ENCODE measurements at regions of chr5 and their contacts with region 1.

Region 1: GRCh38 chr5:180784497-180785097 is 18.0 kb downstream of the MGAT1 start:
- DNase-seq: no peak
- H3K4me3 ChIP-seq: no peak overlapping the region
- H3K27ac ChIP-seq: no peak overlapping the region
- H3K4me1 ChIP-seq: peaks cover 19% of the 10 kb centered on the region
- H3K27me3 ChIP-seq: no peaks in the 10 kb centered on the region
- CTCF ChIP-seq: peak; percentile 68 to 85 (median 72)

Region 2: DNA sequence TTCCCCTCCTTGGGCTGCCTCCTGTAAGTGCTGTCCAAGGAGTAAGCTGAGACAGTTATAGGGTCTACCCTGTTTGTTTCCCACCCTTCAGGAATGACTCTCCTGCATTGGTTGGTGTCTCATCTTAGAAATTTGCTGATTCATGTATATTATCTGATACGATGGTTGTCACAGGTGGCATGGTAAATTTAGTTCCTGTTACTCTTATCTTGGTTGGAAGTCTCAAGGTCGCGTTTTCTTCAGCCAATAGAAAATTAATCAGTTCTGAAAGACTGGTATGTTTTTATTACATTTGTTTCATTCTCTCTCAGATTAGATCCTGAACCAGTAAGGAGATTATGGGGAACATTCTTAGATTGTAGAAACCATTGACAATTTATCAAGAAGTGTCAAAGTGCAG is 236.0 kb before region 1 on chr5:
- dilution Hi-C with region 1: no loop called
- DNase-seq: no peak
- H3K4me3 ChIP-seq: no peak overlapping the region
- H3K27ac ChIP-seq: no peak overlapping the region
- H3K4me1 ChIP-seq: no peaks in the 10 kb centered on the region
- H3K27me3 ChIP-seq: no peaks in the 10 kb centered on the region
- CTCF ChIP-seq: no peak

Region 3: DNA sequence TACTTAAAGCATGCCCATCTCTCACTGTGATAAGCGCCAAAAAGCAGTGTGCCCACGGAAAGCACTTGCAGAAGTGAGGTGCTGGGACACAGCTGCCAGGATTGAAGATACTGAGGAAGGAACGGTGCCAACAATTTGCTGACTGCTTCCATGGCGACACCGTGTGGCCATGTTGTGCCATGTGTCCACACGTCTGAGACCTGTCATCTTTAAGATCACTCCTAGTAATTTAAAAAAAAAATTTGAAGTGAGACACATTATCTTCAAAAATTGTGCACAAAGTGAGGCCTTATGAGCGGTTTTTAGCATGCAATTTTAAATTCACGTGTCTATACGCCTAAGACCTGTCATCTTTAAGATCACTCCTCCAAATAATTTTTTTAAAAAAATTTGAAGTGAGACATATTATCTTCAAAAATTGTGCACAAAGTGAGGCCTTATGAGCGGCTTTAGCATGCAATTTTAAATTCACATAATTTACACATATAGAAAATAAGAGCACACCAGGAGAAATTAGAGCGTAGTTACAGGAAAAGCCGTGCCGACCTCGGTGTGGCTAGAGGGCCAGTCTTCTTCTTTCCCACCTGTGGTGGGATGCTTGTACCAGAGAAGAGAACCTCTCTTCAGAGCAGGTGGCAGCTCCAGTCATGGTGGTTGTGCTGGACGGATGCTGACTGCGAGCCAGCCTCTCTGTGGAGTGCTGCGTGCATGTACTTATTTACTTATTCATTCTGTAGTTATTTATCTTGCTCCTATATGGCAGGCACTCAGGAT is 113.8 kb before region 1 on chr5:
- dilution Hi-C with region 1: no loop called
- DNase-seq: peak; percentile 11
- H3K4me3 ChIP-seq: no peak overlapping the region
- H3K27ac ChIP-seq: no peak overlapping the region
- H3K4me1 ChIP-seq: no peaks in the 10 kb centered on the region
- H3K27me3 ChIP-seq: peaks cover 13% of the 10 kb centered on the region
- CTCF ChIP-seq: peak; percentile 60 to 89 (median 68)

Region 4: DNA sequence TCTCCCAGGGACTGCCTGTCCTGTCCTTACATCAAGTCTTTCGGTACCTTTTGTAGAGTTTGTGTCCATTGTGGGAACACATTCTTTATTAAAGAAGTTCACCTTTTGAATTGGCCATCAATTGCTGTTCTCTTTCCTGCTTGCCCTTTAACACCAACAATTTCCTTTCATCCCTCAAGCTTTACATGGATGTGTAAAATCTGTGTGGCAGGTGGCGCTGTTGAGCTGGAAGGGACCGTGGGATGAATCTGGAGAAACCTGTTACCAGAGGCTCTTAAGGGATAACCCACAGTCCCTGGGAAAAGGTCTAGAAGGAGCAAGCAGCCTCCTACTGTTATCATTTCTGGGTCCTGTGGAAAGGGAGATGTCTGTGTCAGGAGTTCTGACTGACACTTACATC is 84.4 kb after region 1 on chr5:
- dilution Hi-C with region 1: loop called (anchors 5 kb)
- DNase-seq: no peak
- H3K4me3 ChIP-seq: no peak overlapping the region
- H3K27ac ChIP-seq: no peak overlapping the region
- H3K4me1 ChIP-seq: no peaks in the 10 kb centered on the region
- H3K27me3 ChIP-seq: no peaks in the 10 kb centered on the region
- CTCF ChIP-seq: peak; percentile 78 to 92 (median 81)